ENCODE measurements at regions of chr1 and their contacts with region 1.

Region 1: DNA sequence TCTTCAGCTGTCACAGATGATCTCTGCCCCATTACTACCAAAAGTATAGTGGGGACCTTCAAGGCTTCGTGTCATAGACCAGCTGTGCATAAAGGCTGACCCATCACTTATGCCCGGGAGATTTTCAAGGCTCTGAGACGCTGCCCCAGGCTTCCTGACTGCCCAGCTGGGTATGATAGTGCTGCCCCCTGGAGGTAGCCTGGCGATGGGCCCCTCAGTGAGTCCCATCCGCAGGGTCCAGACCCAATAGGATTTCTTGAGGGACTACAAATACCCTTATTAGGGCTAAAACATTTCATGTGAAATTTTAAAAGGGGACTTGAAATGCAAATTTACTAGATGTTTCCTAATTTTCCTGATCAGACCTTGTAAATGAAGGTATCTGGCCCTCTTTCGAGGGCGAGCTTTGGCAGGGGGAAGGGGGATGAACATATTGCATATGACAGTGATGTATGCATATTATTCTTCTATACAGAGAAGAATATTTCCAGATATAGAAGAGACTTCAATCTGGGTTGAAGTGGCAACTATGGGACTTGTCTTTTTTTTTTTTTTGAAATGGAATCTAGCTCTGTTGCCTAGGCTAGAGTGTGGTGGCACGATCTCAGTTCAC is 11.7 kb upstream of the FCMR start:
- DNase-seq: peak; percentile 67 to 86
- ATAC-seq: peak; percentile 61 to 80 (median 71)
- H3K4me3 ChIP-seq: no peak overlapping the region
- H3K4me3 Mint-ChIP-seq: no peak overlapping the region
- H3K27ac ChIP-seq: no peak overlapping the region
- H3K27ac Mint-ChIP-seq: peak overlapping the region in 1 of 2 donors; percentile 44
- H3K4me1 ChIP-seq: peaks cover 41% of the 10 kb centered on the region
- H3K4me1 Mint-ChIP-seq: peaks cover 26 to 30% of the 10 kb centered on the region in 2 donors
- H3K27me3 ChIP-seq: no peaks in the 10 kb centered on the region
- H3K27me3 Mint-ChIP-seq: no peaks in the 10 kb centered on the region
- CTCF ChIP-seq: peak; percentile 95

Region 2: DNA sequence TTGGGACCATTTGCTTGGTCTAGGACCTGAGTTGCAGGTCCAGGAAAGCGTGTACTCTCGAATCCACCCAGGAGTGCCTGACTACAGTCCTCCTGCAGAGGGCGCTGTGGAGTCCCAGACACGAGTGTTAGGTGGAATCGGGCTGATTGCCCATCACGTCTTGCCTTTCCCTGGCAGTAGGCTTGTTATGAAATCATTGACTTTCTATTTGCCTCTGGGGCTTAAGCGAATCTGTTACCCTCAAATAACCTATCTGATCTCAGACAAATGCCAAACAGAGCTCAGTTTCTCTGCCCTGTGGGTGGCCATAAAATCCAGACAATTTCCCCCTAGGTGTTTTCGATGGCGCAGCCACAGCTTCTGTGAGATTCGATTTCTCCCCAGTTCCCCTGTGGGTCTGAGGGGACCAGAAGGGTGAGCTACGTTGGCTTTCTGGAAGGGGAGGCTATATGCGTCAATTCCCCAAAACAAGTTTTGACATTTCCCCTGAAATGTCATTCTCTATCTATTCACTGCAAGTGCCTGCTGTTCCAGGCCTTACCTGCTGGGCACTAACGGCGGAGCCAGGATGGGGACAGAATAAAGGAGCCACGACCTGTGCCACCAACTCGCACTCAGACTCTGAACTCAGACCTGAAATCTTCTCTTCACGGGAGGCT is 68.3 kb before region 1 on chr1 and contains the start of gene IL20:
- intact Hi-C with region 1: loop called (anchors 1 kb)
- DNase-seq: peak; percentile 79 to 93
- ATAC-seq: peak; percentile 84 to 96 (median 95)
- H3K4me3 ChIP-seq: no peak within 1 kb of the TSS
- H3K4me3 Mint-ChIP-seq: no peak within 1 kb of the TSS
- H3K27ac ChIP-seq: no peak within 1 kb of the TSS
- H3K27ac Mint-ChIP-seq: no peak within 1 kb of the TSS
- H3K4me1 ChIP-seq: no peaks in the 10 kb centered on the region
- H3K4me1 Mint-ChIP-seq: peaks cover 0 to 6% of the 10 kb centered on the region in 2 donors
- H3K27me3 ChIP-seq: no peaks in the 10 kb centered on the region
- H3K27me3 Mint-ChIP-seq: peaks cover 23 to 47% of the 10 kb centered on the region in 2 donors
- CTCF ChIP-seq: peak; percentile 94
- total RNA-seq, gene IL20: not detected

Region 3: DNA sequence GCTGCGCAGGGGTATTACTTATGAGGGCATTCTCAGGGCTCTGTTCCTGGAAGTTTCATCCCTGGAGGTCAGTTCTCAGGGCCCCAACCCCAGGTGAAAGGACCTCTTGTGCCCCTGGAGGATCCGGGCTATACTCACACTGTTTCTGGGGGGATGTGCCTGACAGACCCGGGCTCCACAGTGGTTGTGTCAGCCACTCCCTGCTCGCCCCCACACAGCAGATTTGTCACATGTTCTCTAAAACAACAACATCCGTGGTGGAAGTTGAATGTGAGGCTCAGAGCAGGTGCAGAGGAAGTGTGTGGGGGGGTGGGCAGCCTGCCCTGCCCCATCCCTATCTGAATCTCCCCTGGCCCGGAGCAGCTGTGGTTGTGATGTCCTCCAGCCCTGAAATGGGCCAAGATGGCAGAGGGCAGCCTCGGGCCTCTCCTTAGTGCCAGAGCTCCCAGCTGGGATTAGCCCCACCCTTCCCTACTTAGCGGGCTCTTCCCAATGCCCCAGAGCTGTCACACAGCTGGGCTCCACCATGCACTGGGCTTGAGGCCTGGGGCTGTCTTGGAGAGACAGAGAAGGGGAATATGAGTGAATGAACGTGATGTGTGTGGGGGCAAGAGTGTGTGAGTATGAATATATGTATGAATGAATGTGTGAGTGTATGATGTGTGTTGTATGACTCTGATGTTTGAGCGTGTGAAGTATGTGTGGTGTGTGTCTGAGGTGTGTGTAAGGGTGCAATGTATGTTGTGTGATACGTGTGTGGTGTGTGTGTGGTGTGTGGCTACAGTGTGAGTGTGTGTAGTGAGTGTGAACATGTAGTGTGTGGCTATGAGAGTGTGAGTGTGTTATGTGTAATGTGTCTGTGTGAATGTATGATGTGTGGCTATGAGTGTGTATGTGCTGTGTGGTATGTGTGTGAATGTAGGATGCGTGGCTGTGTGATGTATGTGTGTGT is 10.2 kb before region 1 on chr1:
- intact Hi-C with region 1: no loop called
- DNase-seq: peak; percentile 60 to 86
- ATAC-seq: peak; percentile 37 to 77 (median 54)
- H3K4me3 ChIP-seq: no peak overlapping the region
- H3K4me3 Mint-ChIP-seq: no peak overlapping the region
- H3K27ac ChIP-seq: peak overlapping the region; percentile 93
- H3K27ac Mint-ChIP-seq: no peak overlapping the region
- H3K4me1 ChIP-seq: peaks cover 81% of the 10 kb centered on the region
- H3K4me1 Mint-ChIP-seq: peaks cover 9 to 18% of the 10 kb centered on the region in 2 donors
- H3K27me3 ChIP-seq: no peaks in the 10 kb centered on the region
- H3K27me3 Mint-ChIP-seq: no peaks in the 10 kb centered on the region
- CTCF ChIP-seq: no peak

Region 4: DNA sequence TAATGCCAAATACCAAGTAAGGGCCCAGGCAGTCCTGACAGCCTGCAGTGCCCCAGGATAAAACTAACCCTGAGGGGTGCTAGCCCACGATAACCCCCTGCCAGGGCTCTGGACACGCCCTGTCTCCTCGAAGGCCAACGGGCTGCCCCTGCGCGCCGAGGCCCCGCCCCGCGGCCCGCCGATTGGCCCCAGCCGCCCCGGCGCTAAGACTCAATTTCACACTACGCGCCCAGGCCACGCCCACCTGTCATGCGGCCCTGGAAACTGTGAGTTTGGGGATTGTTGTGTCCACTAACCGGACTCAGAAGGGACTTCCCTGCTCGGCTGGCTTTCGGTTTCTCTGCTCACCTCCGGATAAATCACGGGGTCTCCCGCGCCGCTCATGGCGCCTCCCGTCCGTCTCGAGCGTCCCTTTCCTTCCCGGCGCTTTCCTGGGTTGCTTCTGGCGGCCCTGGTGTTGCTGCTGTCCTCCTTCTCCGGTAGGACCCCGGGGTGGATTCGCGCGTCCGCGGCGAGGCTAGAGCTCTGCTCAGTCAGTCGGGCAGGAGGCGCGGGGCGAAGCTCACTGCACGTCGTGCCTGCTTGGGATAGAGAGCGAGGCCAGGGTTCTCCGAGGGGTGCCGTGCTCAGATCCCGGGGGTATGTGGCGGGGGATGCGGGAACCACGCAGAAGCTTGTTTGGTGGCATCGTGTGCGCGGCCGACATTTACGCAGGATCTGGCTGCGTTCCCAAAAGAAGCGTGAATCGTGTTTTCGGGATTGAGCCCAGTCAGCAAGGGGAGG is 711.6 kb after region 1 on chr1 and contains the start of gene CR1L:
- intact Hi-C with region 1: no loop called
- DNase-seq: peak; percentile 74 to 76
- ATAC-seq: peak; percentile 96 to 98 (median 98)
- H3K4me3 ChIP-seq: peak within 1 kb of the TSS; percentile 47
- H3K4me3 Mint-ChIP-seq: peak within 1 kb of the TSS; percentile 82
- H3K27ac ChIP-seq: no peak within 1 kb of the TSS
- H3K27ac Mint-ChIP-seq: peak within 1 kb of the TSS; percentile 56
- H3K4me1 ChIP-seq: peaks cover 9% of the 10 kb centered on the region
- H3K4me1 Mint-ChIP-seq: peaks cover 12 to 16% of the 10 kb centered on the region in 2 donors
- H3K27me3 ChIP-seq: peaks cover 5% of the 10 kb centered on the region
- H3K27me3 Mint-ChIP-seq: peaks cover 15 to 20% of the 10 kb centered on the region in 2 donors
- CTCF ChIP-seq: no peak
- total RNA-seq, gene CR1L: 0.98 TPM in 1 of 3 donors, not detected in the others